Mammary epithelial cell (primary cell): ENCODE measurements at regions of chr1 and their contacts with region 1.

Region 1: GRCh38 chr1:154220071-154220969 is at the start of gene UBAP2L:
- DNase-seq: peak; percentile 100
- H3K4me3 ChIP-seq: peak within 1 kb of the TSS; percentile 94 to 98 (median 95)
- H3K27ac ChIP-seq: peak within 1 kb of the TSS; percentile 97
- H3K4me1 ChIP-seq: peaks cover 19% of the 10 kb centered on the region
- H3K27me3 ChIP-seq: no peaks in the 10 kb centered on the region
- CTCF ChIP-seq: no peak
- total RNA-seq, gene UBAP2L: 63.7 to 168 TPM

Region 2: DNA sequence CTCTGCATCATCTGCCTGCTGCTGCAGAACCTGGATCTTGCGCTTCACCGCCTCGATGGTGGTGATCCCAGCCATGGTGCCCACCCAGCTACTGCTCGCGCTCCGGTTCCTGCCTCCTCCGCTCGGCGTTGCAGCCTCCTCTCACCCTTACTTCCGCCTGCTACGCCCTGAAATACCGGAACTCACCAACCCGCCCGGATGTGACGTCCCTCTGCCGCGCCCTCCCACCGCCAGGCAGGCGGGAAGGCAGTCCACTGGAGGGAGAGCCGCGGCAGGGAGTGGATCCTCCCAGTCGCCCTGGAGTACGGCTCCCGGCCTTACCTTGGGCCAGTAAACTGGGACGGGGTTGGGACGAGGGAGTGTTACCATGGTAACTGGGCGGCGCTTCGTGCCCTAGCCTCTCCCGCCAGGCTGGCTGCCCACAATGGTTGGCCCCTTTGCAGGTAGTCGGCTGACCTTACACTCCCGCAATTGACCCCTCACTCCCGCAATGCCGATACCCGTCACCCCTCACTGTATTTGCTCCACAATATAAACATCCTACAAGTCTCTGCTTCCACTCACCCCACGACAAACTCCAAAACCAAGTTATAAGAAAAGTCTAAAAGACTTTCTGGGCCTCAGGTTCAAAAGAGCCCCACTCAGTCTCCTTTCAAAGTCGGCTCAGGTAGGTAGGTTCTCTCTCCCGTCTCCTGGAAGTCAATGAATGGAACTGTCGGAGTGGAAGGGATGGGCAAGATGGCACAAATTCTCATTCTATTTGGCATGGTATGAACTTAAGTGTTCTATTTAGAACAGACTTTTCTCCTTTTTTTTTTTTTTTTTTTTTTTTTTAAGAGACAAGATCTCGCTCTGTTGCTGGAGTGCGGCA is 37.0 kb before region 1 on chr1:
- CTCF ChIA-PET with region 1: interaction called, 4 read pairs
- dilution Hi-C with region 1: no loop called
- in situ Hi-C with region 1: no loop called
- intact Hi-C with region 1: loop called (anchors 1 kb)
- DNase-seq: peak; percentile 99
- H3K4me3 ChIP-seq: peak overlapping the region; percentile 85 to 96 (median 91)
- H3K27ac ChIP-seq: peak overlapping the region; percentile 94
- H3K4me1 ChIP-seq: peaks cover 34% of the 10 kb centered on the region
- H3K27me3 ChIP-seq: no peaks in the 10 kb centered on the region
- CTCF ChIP-seq: peak in 1 of 2 donors; percentile 10

Region 3: GRCh38 chr1:154206196-154206595 is 14.1 kb before region 1 on chr1 and contains the start of gene CFAP141:
- CTCF ChIA-PET with region 1: no interaction called
- dilution Hi-C with region 1: no loop called
- in situ Hi-C with region 1: no loop called
- intact Hi-C with region 1: loop called (anchors 1 kb)
- DNase-seq: peak; percentile 35
- H3K4me3 ChIP-seq: no peak within 1 kb of the TSS
- H3K27ac ChIP-seq: peak within 1 kb of the TSS; percentile 49
- H3K4me1 ChIP-seq: no peaks in the 10 kb centered on the region
- H3K27me3 ChIP-seq: no peaks in the 10 kb centered on the region
- CTCF ChIP-seq: no peak
- total RNA-seq, gene CFAP141: not detected

Region 4: DNA sequence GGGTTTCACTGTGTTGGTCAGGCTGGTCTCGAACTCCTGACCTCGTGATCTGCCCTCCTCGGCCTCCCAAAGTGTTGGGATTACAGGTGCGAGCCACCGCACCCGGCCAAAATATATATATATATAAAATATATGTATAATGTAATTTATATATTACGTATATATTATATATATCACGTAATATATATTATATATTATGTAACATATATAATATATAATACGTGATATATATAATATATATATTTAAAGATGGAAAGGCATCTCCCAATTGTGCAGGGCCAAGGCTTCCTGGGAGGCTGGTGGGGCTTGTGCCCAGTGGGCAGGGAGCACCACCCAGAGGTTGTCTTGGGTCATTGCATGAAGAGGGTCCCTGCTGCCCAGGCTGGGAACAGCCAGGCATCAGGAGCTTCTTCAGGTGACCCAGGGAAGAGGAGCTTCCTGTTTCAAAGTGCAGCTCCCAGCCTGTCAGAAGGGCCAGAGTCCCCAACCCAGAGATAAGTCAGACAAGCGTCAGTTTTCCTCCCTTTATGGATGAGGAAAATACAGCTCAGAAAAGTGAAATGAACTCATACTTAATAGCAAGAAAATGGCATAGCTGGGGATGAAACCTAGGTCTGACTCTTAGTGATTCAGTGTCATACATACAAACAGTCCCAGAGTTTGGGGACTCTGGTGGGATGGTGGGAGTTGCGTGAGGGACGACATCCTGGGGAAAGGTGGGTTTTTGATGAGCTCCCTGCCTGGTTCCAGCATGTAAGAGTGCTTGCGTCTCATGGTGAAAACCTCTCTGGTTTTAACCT is 326.1 kb after region 1 on chr1:
- CTCF ChIA-PET with region 1: no interaction called
- dilution Hi-C with region 1: no loop called
- in situ Hi-C with region 1: no loop called
- intact Hi-C with region 1: no loop called
- DNase-seq: peak; percentile 44
- H3K4me3 ChIP-seq: no peak overlapping the region
- H3K27ac ChIP-seq: no peak overlapping the region
- H3K4me1 ChIP-seq: peaks cover 13% of the 10 kb centered on the region
- H3K27me3 ChIP-seq: no peaks in the 10 kb centered on the region
- CTCF ChIP-seq: peak; percentile 55 to 81